IMR-90 (cell line): ENCODE measurements at regions of chr3 and their contacts with region 1.

Region 1: DNA sequence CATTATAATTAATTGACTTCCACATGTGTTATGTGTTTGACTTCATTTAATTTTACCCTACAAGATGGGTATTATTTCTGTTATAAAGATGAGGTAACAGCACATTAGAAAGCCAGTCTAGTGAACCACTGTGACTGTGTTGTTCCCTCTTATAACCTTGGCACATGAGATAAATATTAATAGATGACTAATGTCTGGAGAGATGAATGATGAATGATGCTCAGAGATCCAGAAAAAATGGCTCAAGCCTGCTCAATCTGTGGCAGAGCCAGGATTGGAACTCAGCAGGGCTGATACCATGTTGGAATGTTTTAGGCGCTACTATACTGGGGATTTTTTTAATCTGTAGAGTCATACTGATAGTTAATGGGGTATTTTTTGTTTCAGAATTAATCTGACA is 118.8 kb upstream of the PTX3 start:
- DNase-seq: no peak
- ATAC-seq: no peak
- H3K4me3 ChIP-seq: no peak overlapping the region
- H3K27ac ChIP-seq: no peak overlapping the region
- H3K4me1 ChIP-seq: no peaks in the 10 kb centered on the region
- H3K27me3 ChIP-seq: no peaks in the 10 kb centered on the region
- CTCF ChIP-seq: no peak
- POLR2A ChIP-seq: no peak
- RAD21 ChIP-seq: no peak

Region 2: DNA sequence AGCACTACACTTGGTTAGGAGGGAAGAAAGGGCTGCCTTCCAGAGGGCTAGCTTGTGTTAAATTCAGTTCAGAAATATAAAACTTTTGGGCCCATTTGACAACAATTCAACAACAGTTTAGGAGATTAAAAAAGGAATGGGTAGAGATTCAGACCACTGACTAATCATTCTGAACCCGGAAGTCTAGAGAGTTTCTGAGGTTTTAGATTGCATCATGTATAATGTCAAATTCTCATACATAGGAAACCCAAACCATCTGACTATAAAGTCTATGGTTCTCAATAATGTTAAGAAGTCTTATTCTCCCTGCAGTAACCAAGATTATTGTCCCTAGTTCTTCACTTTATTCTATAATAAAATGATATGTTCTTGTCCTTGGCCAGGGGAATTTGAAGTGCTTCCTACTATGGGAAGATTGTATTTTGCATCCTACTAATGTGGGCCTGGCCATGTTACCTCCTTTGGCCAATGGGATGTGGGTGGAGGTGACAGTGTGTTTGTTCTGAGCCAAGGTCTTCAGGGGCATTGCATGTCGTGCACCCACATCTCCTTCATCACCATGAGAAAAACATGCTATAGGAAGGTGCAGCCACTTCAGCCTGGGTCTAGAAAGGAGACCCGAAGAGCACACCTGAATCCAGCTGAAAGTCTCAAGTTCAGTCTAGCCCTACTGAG is 91.6 kb before region 1 on chr3:
- CTCF ChIA-PET with region 1: no interaction called
- POLR2A ChIA-PET with region 1: no interaction called
- dilution Hi-C with region 1: no loop called
- in situ Hi-C with region 1: no loop called
- intact Hi-C with region 1: loop called (anchors 5 kb)
- DNase-seq: peak; percentile 34
- ATAC-seq: peak; percentile 37; the same call in 1 of the 2 replicates
- H3K4me3 ChIP-seq: no peak overlapping the region
- H3K27ac ChIP-seq: no peak overlapping the region
- H3K4me1 ChIP-seq: no peaks in the 10 kb centered on the region; the same call in 1 of the 2 replicates
- H3K27me3 ChIP-seq: no peaks in the 10 kb centered on the region
- CTCF ChIP-seq: no peak
- POLR2A ChIP-seq: no peak
- RAD21 ChIP-seq: no peak